MCF 10A (cell line): ENCODE measurements at regions of chr4 and their contacts with region 1.

Region 1: DNA sequence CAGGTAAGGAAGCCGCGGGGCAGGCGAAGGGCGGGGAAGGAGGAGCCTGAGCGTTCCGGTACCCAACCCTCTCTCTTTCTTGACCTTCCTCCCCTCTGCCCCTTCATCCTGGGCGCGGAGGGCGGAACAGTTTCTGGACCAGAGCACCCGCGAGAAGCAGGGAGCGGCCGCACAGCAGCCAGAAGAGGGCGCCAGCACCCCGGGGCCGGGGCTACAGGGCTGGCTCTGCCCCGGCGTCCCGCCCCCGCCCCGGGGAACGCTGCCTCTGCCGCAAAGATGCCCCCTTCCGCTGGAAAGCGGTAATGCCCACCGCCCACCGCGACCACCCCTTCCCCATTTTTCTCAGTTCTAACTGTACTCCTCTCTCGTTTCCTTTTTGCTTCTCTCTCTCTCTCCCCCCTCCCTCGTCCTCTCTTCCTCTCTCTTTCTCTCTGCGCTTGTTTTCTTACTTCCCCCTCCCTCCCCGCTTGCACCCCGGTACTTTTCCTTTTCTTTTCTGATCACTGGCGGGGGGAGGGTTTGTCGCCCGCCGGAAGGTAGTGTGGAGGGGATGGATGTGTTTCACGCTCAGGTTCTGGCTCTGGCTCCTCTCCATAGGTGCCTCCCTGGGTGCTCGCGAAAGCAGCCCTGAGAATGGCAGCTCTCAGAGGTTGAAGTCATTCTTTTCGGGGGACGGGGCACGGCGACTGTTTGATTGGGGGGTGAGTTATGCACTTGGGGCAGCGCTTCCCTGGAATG is 13.1 kb upstream of the PRDM8 start:
- DNase-seq: peak; percentile 85
- H3K4me3 Mint-ChIP-seq: peak overlapping the region; percentile 92
- H3K27ac Mint-ChIP-seq: peak overlapping the region; percentile 83
- H3K4me1 Mint-ChIP-seq: peaks cover 24% of the 10 kb centered on the region
- H3K27me3 Mint-ChIP-seq: no peaks in the 10 kb centered on the region
- CTCF ChIP-seq: peak; percentile 94

Region 2: GRCh38 chr4:79042079-79042674 is 1142.0 kb before region 1 on chr4:
- CTCF ChIA-PET with region 1: no interaction called
- POLR2A ChIA-PET with region 1: no interaction called
- intact Hi-C with region 1: loop called (anchors 10 kb)
- DNase-seq: peak; percentile 59
- H3K4me3 Mint-ChIP-seq: no peak overlapping the region
- H3K27ac Mint-ChIP-seq: no peak overlapping the region
- H3K4me1 Mint-ChIP-seq: no peaks in the 10 kb centered on the region
- H3K27me3 Mint-ChIP-seq: no peaks in the 10 kb centered on the region
- CTCF ChIP-seq: peak; percentile 56

Region 3: DNA sequence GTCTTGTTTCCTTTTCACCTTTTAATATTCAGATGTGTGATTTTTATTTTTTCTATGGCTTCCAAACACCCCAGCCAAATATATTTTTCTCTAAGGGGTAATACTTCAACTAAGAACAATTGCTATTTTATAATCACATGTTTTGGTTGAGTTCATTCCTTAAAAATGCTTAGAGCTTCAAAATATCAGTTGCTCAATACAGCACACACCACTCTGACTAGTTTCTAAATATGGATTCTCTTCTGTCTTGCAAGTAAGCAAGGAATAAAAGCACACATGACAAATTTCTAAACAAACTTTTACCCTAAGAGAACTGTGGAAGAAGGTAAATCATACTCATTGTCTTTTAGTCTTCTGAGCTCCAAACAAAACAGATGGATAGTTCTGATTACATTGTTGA is 138.4 kb before region 1 on chr4:
- CTCF ChIA-PET with region 1: no interaction called
- POLR2A ChIA-PET with region 1: no interaction called
- intact Hi-C with region 1: no loop called
- DNase-seq: no peak
- H3K4me3 Mint-ChIP-seq: no peak overlapping the region
- H3K27ac Mint-ChIP-seq: peak overlapping the region; percentile 31
- H3K4me1 Mint-ChIP-seq: peaks cover 20% of the 10 kb centered on the region
- H3K27me3 Mint-ChIP-seq: no peaks in the 10 kb centered on the region
- CTCF ChIP-seq: no peak

Region 4: DNA sequence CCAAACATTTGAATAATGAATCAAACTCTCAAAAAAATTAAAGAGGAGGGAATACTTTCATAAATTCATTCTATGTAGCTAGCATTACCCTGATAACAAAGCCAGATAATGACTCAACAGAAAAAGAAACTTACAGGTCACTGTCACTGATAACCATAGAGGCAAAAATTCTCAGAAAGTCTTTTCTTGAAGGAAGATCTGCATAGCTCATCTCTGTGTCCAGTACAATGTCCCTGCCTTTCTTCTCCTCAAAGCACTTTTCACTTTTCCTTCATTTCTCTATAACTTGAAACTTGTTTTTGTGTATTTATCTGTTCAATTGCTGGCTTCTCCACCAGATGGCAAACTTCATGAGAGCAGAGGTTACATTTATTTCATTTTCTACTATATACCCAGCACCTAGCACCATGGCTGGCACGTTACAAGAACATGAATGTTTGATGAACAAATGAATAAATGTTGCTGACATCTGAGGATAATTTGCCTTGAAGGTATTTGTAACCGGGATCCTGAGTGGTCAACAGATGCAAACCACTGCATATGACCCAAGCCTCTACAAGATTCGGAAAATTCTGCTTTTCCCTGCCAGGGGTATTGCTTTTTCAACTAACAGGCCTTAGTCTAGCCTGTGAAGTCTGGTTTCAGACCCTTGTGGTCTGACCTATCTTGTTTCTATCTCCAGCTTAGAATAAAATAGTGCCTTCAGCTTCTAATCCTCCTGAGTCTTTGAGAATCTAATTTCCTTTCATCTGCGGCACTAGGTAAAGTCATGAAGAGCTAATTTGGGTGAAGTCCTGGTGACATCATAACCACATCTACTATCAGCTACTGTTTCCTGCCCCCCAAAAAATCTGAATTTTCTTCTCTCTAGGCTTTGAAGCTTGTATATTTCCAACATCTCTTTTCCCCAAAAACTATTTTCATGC is 58.7 kb before region 1 on chr4:
- CTCF ChIA-PET with region 1: interaction called, 12 read pairs
- POLR2A ChIA-PET with region 1: no interaction called
- intact Hi-C with region 1: loop called (anchors 1 kb)
- DNase-seq: peak; percentile 61
- H3K4me3 Mint-ChIP-seq: no peak overlapping the region
- H3K27ac Mint-ChIP-seq: peak overlapping the region; percentile 70
- H3K4me1 Mint-ChIP-seq: peaks cover 36% of the 10 kb centered on the region
- H3K27me3 Mint-ChIP-seq: no peaks in the 10 kb centered on the region
- CTCF ChIP-seq: peak; percentile 53

Region 5: GRCh38 chr4:80173401-80173800 is 10.8 kb before region 1 on chr4:
- CTCF ChIA-PET with region 1: interaction called, 10 read pairs
- POLR2A ChIA-PET with region 1: no interaction called
- intact Hi-C with region 1: no loop called
- DNase-seq: peak; percentile 60
- H3K4me3 Mint-ChIP-seq: no peak overlapping the region
- H3K27ac Mint-ChIP-seq: no peak overlapping the region
- H3K4me1 Mint-ChIP-seq: peaks cover 5% of the 10 kb centered on the region
- H3K27me3 Mint-ChIP-seq: no peaks in the 10 kb centered on the region
- CTCF ChIP-seq: no peak

Region 6: DNA sequence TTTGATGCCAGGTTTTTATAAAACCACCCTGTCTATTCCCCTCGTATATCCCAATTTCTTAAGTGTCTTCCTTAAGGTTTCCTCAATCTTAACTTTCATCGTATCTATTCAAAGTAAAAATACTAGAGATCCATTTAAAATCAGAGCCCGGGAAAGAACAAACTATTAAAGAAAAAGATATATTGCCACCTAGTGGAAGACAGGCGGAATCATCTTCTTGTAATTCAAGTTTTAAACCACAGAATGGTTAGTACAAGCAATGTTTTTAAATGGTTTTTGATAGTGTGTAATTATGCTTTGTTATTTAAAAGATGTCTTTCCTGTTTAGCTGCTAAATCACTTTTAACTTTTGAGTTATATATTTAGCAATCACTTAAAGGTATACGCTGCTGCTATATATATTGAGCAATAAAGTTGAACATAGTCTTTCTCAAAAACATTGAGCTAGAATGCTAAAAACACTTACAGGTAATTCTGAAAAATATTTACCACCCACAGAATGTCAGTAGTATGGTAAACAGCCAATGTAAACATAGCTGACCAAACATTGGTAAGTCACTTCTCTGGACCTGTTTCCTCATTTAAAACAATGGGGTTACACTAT is 31.3 kb after region 1 on chr4:
- CTCF ChIA-PET with region 1: interaction called, 18 read pairs
- POLR2A ChIA-PET with region 1: interaction called, 6 read pairs
- intact Hi-C with region 1: loop called (anchors 1 kb)
- DNase-seq: peak; percentile 39
- H3K4me3 Mint-ChIP-seq: no peak overlapping the region
- H3K27ac Mint-ChIP-seq: no peak overlapping the region
- H3K4me1 Mint-ChIP-seq: peaks cover 15% of the 10 kb centered on the region
- H3K27me3 Mint-ChIP-seq: no peaks in the 10 kb centered on the region
- CTCF ChIP-seq: peak; percentile 44